MCF 10A (cell line): ENCODE measurements at regions of chr12 and their contacts with region 1.

Region 1: DNA sequence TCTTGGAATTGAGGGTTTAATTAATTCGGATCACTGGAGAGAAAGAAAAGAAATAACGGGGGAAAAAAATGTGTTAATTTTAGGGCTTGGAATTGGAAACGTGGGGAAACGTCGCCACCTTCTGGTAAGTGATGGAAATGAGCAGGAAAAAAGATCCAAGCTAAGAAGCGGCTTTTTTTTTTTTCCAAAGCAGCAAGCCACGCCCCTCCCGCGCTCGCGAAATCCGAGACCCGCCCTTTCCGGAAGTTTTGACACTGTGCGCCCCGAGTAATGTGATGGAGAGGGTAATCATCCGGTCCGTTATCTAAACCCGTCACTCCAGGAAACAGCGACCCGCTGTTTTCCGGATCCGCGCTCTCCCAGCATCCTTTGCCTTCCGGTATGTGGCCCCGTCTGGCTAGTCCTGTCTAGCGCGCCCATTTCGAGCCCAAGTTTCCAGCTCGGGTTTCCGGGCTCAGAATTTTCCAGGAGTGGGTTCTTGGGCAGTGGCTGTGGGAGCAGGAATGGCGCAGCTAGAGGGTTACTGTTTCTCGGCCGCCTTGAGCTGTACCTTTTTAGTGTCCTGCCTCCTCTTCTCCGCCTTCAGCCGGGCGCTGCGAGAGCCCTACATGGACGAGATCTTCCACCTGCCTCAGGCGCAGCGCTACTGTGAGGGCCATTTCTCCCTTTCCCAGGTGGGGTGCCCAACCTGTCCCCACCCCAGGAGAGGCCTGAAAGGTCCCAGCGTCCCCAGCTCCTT is at the start of gene ALG10B:
- DNase-seq: peak; percentile 98
- H3K4me3 Mint-ChIP-seq: peak within 1 kb of the TSS; percentile 98
- H3K27ac Mint-ChIP-seq: peak within 1 kb of the TSS; percentile 87
- H3K4me1 Mint-ChIP-seq: peaks cover 11% of the 10 kb centered on the region
- H3K27me3 Mint-ChIP-seq: no peaks in the 10 kb centered on the region
- CTCF ChIP-seq: peak; percentile 73
- total RNA-seq, gene ALG10B: 3.9 and 9.5 TPM in 2 replicates

Region 2: GRCh38 chr12:37672655-37673260 is 643.8 kb before region 1 on chr12:
- CTCF ChIA-PET with region 1: interaction called, 6 read pairs
- POLR2A ChIA-PET with region 1: no interaction called
- intact Hi-C with region 1: loop called (anchors 5 kb)
- DNase-seq: peak; percentile 20
- H3K4me3 Mint-ChIP-seq: no peak overlapping the region
- H3K27ac Mint-ChIP-seq: no peak overlapping the region
- H3K4me1 Mint-ChIP-seq: no peaks in the 10 kb centered on the region
- H3K27me3 Mint-ChIP-seq: no peaks in the 10 kb centered on the region
- CTCF ChIP-seq: peak; percentile 22

Region 3: GRCh38 chr12:38053655-38054464 is 262.7 kb before region 1 on chr12:
- CTCF ChIA-PET with region 1: no interaction called
- POLR2A ChIA-PET with region 1: interaction called, 5 read pairs
- intact Hi-C with region 1: loop called (anchors 1 kb)
- DNase-seq: peak; percentile 68
- H3K4me3 Mint-ChIP-seq: no peak overlapping the region
- H3K27ac Mint-ChIP-seq: no peak overlapping the region
- H3K4me1 Mint-ChIP-seq: peaks cover 8% of the 10 kb centered on the region
- H3K27me3 Mint-ChIP-seq: no peaks in the 10 kb centered on the region
- CTCF ChIP-seq: peak; percentile 47

Region 4: GRCh38 chr12:38138225-38139221 is 178.0 kb before region 1 on chr12:
- CTCF ChIA-PET with region 1: interaction called, 27 read pairs
- POLR2A ChIA-PET with region 1: interaction called, 8 read pairs
- intact Hi-C with region 1: loop called (anchors 1 kb)
- DNase-seq: peak; percentile 81
- H3K4me3 Mint-ChIP-seq: peak overlapping the region; percentile 73
- H3K27ac Mint-ChIP-seq: peak overlapping the region; percentile 17
- H3K4me1 Mint-ChIP-seq: peaks cover 11% of the 10 kb centered on the region
- H3K27me3 Mint-ChIP-seq: no peaks in the 10 kb centered on the region
- CTCF ChIP-seq: peak; percentile 94

Region 5: DNA sequence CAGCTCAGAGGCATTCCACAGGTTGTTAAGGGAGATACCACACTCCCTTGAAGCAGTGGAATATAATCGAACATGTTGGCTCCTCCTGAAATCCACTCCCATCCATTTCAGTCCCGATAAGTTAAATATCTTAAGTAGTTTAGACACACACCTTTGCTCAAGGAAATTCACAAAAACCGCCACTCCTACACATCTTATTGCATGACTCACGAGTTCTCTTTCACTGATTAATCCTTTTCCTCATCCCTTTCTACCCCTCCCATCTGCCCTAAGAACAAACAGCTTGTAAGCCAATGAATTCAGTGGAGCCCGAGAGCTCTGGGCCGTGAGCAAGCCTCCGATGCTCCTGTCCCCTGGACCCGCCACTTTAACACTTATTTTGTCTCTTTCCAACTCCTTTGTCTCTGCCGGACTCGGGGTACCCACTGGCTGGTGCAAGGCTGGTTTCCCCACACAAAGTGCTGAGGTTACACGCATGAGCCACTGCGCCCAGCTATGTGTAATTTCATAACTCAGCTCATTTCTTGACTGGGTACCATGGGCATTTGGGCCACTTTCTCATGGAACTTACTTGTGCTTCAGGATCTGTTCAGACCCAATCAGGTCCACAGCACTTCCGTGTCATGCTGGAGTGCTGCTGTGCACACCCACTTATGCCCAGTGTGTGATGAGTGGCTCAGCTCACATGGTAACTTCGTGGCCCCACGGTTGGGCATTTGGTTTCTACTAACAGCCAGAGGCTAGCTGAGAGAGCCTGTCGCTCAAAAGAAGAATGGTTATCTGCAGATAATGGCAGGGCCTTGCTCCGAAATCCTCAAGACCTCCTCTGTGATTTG is 171.7 kb before region 1 on chr12:
- CTCF ChIA-PET with region 1: interaction called, 12 read pairs
- POLR2A ChIA-PET with region 1: interaction called, 10 read pairs
- intact Hi-C with region 1: no loop called
- DNase-seq: peak; percentile 45
- H3K4me3 Mint-ChIP-seq: no peak overlapping the region
- H3K27ac Mint-ChIP-seq: peak overlapping the region; percentile 10
- H3K4me1 Mint-ChIP-seq: peaks cover 16% of the 10 kb centered on the region
- H3K27me3 Mint-ChIP-seq: no peaks in the 10 kb centered on the region
- CTCF ChIP-seq: no peak

Region 6: GRCh38 chr12:38289396-38289795 is 27.2 kb before region 1 on chr12:
- CTCF ChIA-PET with region 1: no interaction called
- POLR2A ChIA-PET with region 1: no interaction called
- intact Hi-C with region 1: no loop called
- DNase-seq: peak; percentile 56
- H3K4me3 Mint-ChIP-seq: no peak overlapping the region
- H3K27ac Mint-ChIP-seq: no peak overlapping the region
- H3K4me1 Mint-ChIP-seq: peaks cover 10% of the 10 kb centered on the region
- H3K27me3 Mint-ChIP-seq: no peaks in the 10 kb centered on the region
- CTCF ChIP-seq: no peak

Region 7: GRCh38 chr12:38373784-38374183 is 57.2 kb after region 1 on chr12:
- CTCF ChIA-PET with region 1: no interaction called
- POLR2A ChIA-PET with region 1: no interaction called
- intact Hi-C with region 1: no loop called
- DNase-seq: no peak
- H3K4me3 Mint-ChIP-seq: no peak overlapping the region
- H3K27ac Mint-ChIP-seq: no peak overlapping the region
- H3K4me1 Mint-ChIP-seq: no peaks in the 10 kb centered on the region
- H3K27me3 Mint-ChIP-seq: no peaks in the 10 kb centered on the region
- CTCF ChIP-seq: no peak